ENCODE measurements at regions of chr12 and their contacts with region 1.

Region 1: GRCh38 chr12:122366685-122367475 is 55.6 kb downstream of the CLIP1 start:
- DNase-seq: peak; percentile 73
- H3K4me3 ChIP-seq: no peak overlapping the region
- H3K27ac ChIP-seq: peak overlapping the region; percentile 57
- H3K4me1 ChIP-seq: peaks cover 31% of the 10 kb centered on the region
- H3K27me3 ChIP-seq: no peaks in the 10 kb centered on the region
- CTCF ChIP-seq: no peak
- POLR2A ChIP-seq: no peak

Region 2: DNA sequence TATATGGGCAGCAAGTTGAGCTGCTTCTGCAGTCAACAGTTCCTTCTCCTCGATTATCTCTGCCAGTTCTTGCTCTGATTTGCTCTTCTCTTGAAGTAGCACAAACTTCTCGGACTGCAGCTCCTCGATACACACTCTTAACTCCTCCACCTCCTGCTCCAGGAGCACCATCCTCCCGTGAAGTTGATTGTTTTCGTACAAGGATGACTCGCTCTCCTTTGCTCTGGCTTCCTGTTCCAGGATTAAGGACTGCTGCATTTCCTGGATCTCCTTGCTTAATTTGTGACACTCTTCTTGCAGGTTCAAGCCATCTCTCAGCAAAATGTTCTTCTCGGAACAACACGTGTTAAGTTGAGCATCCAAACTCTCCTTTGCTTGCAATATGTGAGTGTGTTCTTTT is 44.4 kb before region 1 on chr12:
- CTCF ChIA-PET with region 1: no interaction called
- POLR2A ChIA-PET with region 1: no interaction called
- dilution Hi-C with region 1: no loop called
- intact Hi-C with region 1: no loop called
- DNase-seq: peak; percentile 33
- H3K4me3 ChIP-seq: no peak overlapping the region
- H3K27ac ChIP-seq: no peak overlapping the region
- H3K4me1 ChIP-seq: peaks cover 29% of the 10 kb centered on the region
- H3K27me3 ChIP-seq: no peaks in the 10 kb centered on the region
- CTCF ChIP-seq: no peak
- POLR2A ChIP-seq: no peak

Region 3: DNA sequence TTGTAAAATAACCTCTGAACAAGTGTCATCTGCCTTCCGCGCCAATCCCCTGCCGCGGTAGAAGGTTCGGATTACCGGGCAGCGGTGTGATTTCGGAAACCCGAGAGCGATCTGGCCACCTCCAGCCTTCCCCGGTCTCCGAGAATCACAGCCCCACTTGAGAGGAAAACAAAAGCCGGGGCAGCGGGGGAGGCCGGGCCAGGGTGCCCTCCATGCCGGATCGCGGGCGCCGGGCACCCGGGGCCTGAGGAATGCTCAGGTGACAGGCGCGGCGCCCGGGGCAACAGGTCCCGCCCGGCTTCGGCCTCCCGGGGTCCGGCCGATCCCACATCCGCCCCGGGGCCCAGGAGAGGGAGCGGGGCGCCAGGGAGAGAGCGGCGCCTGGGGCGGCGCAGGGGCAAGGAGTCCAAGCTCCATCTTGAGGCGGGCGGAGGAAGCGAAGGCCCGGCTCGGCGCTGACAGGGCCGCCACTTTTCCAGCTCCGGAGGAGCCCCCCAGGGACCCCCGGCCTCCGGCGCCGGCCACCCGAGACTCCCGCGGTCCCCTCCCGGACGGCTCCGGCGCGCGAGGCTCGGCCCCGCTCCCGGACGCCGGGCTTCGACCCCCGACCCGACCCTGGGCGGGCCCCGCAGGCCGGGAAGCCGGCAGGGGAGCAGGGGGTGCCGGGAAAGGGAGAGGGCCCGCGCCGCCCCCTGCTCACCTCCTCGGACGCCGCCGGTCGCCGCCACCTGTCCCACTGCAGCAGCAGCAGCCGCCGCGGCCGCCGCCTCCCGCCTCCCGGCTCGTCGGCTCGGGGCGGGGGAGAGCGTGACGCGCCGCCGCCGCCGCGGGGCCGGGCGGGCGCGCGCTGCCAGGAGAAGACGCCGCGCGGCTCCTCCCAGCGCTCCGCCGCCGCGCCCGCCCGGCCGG is 55.2 kb after region 1 on chr12 and contains the start of gene CLIP1:
- CTCF ChIA-PET with region 1: no interaction called
- POLR2A ChIA-PET with region 1: no interaction called
- dilution Hi-C with region 1: no loop called
- intact Hi-C with region 1: loop called (anchors 2 kb)
- DNase-seq: peak; percentile 63
- H3K4me3 ChIP-seq: peak within 1 kb of the TSS; percentile 47 to 82 (median 82)
- H3K27ac ChIP-seq: peak within 1 kb of the TSS; percentile 81
- H3K4me1 ChIP-seq: peaks cover 49% of the 10 kb centered on the region
- H3K27me3 ChIP-seq: no peaks in the 10 kb centered on the region
- CTCF ChIP-seq: peak; percentile 9 to 54
- POLR2A ChIP-seq: peak; percentile 54
- total RNA-seq, gene CLIP1: 71.0 and 84.3 TPM in 2 replicates

Region 4: DNA sequence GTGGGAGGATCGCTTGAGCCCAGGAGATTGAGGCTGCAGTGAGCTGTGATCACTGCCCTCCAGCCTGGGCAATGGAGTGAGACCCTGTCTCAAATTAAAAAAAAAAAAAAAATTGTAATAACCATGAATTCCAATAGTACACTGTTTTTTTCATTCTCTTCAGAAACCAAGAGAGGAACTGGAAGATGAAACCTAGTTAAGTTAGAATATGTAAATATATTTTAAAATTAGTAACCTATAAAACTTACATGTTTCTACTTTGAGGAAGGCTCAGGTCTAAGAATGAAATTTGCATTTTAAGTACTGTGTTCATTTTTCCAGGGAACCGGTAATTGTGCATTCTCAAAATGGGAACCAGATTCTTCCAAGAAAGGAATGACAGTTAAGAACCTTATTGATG is 179.0 kb after region 1 on chr12:
- CTCF ChIA-PET with region 1: no interaction called
- POLR2A ChIA-PET with region 1: no interaction called
- dilution Hi-C with region 1: no loop called
- intact Hi-C with region 1: no loop called
- DNase-seq: no peak
- H3K4me3 ChIP-seq: no peak overlapping the region
- H3K27ac ChIP-seq: no peak overlapping the region
- H3K4me1 ChIP-seq: no peaks in the 10 kb centered on the region
- H3K27me3 ChIP-seq: no peaks in the 10 kb centered on the region
- CTCF ChIP-seq: no peak
- POLR2A ChIP-seq: no peak

Region 5: GRCh38 chr12:123180171-123180570 is 813.3 kb after region 1 on chr12:
- CTCF ChIA-PET with region 1: no interaction called
- POLR2A ChIA-PET with region 1: no interaction called
- dilution Hi-C with region 1: no loop called
- intact Hi-C with region 1: no loop called
- DNase-seq: no peak
- H3K4me3 ChIP-seq: no peak overlapping the region
- H3K27ac ChIP-seq: no peak overlapping the region
- H3K4me1 ChIP-seq: no peaks in the 10 kb centered on the region
- H3K27me3 ChIP-seq: no peaks in the 10 kb centered on the region
- CTCF ChIP-seq: no peak
- POLR2A ChIP-seq: no peak